Posterior vena cava (tissue), 2 donors: ENCODE measurements at regions of chr5 and their contacts with region 1.

Region 1: GRCh38 chr5:32076699-32077695 is 97.1 kb downstream of the GOLPH3 start:
- DNase-seq: no peak

Region 2: GRCh38 chr5:31581498-31582099 is 495.4 kb before region 1 on chr5:
- intact Hi-C with region 1: loop called in 1 of 2 experiments (anchors 10 kb)
- DNase-seq: no peak

Region 3: DNA sequence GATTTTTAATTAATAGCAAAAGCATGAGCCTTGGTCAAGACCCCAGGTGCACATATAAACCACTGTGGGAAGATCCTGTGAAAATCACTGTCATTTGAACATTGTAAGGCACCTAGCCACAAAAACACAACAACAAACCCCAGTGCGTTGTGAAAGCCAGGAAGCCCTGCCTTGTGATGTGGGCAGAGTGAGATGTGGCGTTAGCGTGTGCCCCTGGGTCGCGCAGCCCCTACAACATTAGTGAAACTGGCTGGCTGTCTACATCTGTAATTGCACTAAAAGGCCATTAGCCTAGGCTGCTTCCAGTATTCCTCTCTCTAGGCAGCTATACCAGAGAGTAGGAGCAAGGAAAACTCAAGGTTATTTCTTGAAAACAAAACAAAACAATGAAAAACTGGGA is 459.1 kb before region 1 on chr5:
- intact Hi-C with region 1: no loop called
- DNase-seq: no peak

Region 4: DNA sequence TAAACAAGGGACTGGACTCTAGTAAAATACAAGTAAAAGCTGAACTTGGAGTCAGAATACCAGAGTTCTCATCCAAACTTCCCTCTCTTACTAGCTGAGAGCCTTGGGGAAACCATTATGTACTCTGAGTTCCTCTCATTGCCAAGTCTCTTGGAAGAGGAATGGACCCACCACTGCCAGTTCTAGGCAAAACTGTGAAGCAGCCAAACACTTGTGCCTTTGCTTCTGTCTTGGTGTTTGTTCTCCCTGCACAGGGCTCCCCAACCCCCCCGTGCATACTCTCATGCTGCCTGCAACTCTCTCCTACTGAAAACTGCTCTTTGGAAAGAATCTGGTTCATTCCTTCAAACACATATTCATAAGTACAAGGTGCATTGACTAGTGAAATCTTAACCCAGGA is 335.5 kb before region 1 on chr5:
- intact Hi-C with region 1: loop called in 1 of 2 experiments (anchors 10 kb)
- DNase-seq: no peak

Region 5: DNA sequence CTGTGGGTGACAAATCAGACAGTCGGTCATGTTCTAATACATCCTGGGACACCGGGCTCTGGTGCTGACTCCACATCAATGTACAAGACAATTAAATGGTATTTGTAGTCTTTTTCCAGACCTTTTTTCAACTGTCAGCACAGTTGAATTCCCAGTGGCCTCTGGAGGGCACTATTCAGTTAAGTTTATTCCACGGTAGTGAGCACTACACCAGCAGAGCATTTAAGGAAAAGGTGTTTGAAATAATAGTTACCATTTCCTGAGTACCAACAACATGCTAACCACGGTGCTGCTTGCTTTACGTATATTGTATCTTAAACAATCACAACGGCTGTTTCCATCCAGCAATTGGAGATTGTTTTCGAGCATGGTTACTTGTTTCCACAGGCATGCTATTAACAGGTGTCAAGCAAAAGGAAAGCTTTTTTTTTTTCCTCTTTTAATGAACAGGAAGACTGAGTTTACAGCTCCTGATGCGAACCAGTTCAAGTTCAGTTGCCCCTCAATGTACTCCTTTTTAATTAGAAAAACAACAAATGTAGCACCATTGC is 251.4 kb before region 1 on chr5:
- intact Hi-C with region 1: loop called in 1 of 2 experiments (anchors 5 kb)
- DNase-seq: no peak